HCT116 (cell line): ENCODE measurements at regions of chr1 and their contacts with region 1.

Region 1: DNA sequence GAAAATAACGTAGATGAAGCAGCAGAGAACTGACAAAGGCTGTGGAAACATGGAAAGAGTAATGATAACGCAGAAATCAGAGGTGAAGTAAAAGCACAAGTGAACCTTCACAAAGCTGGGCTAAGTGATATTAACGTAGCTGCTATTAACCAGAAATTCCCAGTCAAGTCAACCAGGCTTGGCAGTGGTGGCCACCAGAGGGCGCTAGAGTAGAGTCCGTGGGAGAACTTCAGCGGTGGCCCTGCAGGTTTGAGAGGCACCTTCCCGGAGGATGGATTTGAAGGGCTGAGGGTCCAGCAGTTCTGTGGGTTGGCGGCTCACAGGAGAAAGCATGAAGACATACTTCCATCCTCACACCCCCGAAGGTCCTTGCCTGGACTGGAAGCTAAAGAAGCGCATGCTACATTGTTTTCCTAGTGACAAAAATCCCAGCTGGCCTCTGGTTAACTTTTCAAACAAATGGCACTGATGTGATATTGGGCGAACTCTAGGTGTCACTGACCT is 81.7 kb upstream of the ZNF648 start:
- DNase-seq: peak; percentile 58
- ATAC-seq: peak; percentile 95
- H3K4me3 ChIP-seq: no peak overlapping the region
- H3K27ac ChIP-seq: no peak overlapping the region
- H3K4me1 ChIP-seq: no peaks in the 10 kb centered on the region
- H3K27me3 ChIP-seq: no peaks in the 10 kb centered on the region
- CTCF ChIP-seq: peak; percentile 86 to 97 (median 92)
- POLR2A ChIP-seq: no peak
- RAD21 ChIP-seq: peak; percentile 97

Region 2: DNA sequence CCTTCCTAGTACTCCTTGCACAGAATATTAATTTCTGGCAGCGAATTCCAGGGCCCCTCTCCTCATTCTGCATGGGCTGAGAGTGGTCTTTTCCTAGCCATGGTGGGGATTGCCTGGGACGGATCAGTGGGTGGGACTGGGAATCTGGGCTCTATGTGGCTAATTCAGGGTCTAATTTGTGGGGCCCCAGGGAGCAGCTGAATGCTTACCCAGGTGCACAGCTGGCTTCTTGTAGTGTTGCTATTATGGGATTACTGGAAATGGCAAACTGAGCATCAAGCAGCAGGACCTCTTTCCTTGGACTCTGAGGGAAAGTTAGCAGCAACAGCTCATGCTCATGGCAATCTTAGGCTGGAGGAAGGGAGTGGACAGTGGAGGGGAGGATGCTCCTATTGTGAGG is 847.0 kb before region 1 on chr1:
- CTCF ChIA-PET with region 1: no interaction called
- POLR2A ChIA-PET with region 1: no interaction called
- RAD21 ChIA-PET with region 1: no interaction called
- intact Hi-C with region 1: no loop called
- DNase-seq: no peak
- ATAC-seq: no peak
- H3K4me3 ChIP-seq: no peak overlapping the region
- H3K27ac ChIP-seq: no peak overlapping the region
- H3K4me1 ChIP-seq: no peaks in the 10 kb centered on the region
- H3K27me3 ChIP-seq: 0 out of 2 replicates have a peak, but pooled peaks cover 4% of the 10 kb centered on the region
- CTCF ChIP-seq: no peak
- POLR2A ChIP-seq: no peak
- RAD21 ChIP-seq: no peak

Region 3: DNA sequence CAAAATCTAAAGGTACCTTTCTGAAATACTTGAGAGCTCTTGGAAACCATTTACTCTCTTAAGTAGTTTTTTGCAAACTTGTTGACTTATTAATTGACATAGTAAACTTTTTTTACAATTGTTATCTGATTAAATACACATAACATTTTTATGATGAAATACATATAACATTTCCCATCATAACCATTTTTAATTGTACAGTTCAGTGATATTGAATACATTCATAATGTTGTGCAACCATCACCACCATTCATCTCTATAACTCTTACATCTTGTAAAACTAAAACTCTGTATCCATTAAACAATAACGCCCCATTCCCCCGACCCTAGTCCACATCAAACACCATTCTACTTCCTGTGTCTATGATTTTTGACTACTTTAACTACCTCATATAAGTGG is 14.0 kb after region 1 on chr1:
- CTCF ChIA-PET with region 1: interaction called, 15 read pairs
- POLR2A ChIA-PET with region 1: no interaction called
- RAD21 ChIA-PET with region 1: no interaction called
- intact Hi-C with region 1: no loop called
- DNase-seq: no peak
- ATAC-seq: no peak
- H3K4me3 ChIP-seq: no peak overlapping the region
- H3K27ac ChIP-seq: no peak overlapping the region
- H3K4me1 ChIP-seq: no peaks in the 10 kb centered on the region
- H3K27me3 ChIP-seq: no peaks in the 10 kb centered on the region
- CTCF ChIP-seq: no peak
- POLR2A ChIP-seq: no peak
- RAD21 ChIP-seq: no peak

Region 4: DNA sequence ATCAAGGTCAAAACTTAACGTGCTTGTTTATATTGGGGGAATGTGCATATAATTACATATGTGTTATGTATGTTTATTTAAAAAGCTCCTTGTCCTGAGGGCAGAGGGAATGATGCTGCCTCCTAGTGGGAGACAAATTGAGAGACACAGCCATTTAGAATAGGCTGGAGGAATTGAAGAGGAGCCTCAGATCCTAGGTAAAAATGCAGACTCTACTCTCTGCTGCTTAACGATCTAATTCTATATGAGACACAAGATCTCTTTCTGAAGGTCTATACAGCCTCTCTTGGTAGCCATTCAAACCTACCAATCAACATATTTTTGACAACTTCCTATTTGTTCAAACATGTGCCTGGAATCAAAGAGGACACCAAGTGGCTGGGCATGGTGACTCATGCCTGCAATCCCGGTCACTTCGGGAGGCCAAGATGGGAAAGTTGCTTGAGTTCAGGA is 54.9 kb after region 1 on chr1:
- CTCF ChIA-PET with region 1: interaction called, 14 read pairs
- POLR2A ChIA-PET with region 1: no interaction called
- RAD21 ChIA-PET with region 1: interaction called, 7 to 10 read pairs
- intact Hi-C with region 1: loop called (anchors 2 kb)
- DNase-seq: no peak
- ATAC-seq: peak; percentile 76
- H3K4me3 ChIP-seq: no peak overlapping the region
- H3K27ac ChIP-seq: no peak overlapping the region
- H3K4me1 ChIP-seq: no peaks in the 10 kb centered on the region
- H3K27me3 ChIP-seq: no peaks in the 10 kb centered on the region
- CTCF ChIP-seq: peak; percentile 41 to 43 (median 42); a peak in 5 of 6 replicates
- POLR2A ChIP-seq: no peak
- RAD21 ChIP-seq: peak; percentile 51

Region 5: GRCh38 chr1:182391362-182392044 is 248.3 kb after region 1 on chr1 and contains the start of gene GLUL:
- CTCF ChIA-PET with region 1: interaction called, 96 read pairs
- POLR2A ChIA-PET with region 1: interaction called, 18 read pairs
- RAD21 ChIA-PET with region 1: interaction called, 16 to 22 read pairs
- intact Hi-C with region 1: loop called (anchors 1 kb)
- DNase-seq: peak; percentile 68
- ATAC-seq: peak; percentile 93
- H3K4me3 ChIP-seq: peak within 1 kb of the TSS; percentile 71 to 85
- H3K27ac ChIP-seq: peak within 1 kb of the TSS; percentile 94
- H3K4me1 ChIP-seq: peaks cover 13 to 18% of the 10 kb centered on the region in 2 experiments
- H3K27me3 ChIP-seq: no peaks in the 10 kb centered on the region
- CTCF ChIP-seq: no peak
- POLR2A ChIP-seq: peak; percentile 97
- RAD21 ChIP-seq: no peak; the same call in 1 of the 2 replicates
- total RNA-seq, gene GLUL: 165 TPM

Region 6: DNA sequence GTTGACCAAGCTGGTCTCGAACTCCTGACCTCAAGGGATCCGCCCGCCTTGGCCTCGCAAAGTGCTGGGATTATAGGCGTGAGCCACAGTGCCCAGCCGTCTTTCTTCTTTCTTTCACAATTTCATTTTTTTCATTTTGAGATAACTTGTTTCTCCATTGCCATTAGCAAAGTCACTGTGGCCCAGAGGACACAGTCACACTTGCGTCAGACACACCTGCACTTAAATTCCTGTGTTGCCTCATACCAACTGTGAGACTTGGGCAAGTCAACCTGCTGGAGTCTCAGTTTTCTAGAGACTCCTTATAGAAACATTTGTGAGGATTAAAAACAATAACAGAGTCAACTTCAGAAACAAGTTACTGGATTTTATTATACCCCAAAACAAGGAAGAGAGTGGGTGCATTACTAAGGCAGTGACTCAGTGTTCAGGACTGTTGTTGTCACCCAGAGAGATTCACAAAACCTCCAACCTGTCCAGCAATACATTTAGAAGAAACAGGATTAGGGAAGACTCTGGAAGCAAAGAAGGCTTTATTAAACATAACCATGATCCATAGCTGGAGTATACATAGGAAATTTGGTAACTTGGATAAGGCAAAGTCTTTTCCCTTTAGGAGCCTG is 254.7 kb after region 1 on chr1:
- CTCF ChIA-PET with region 1: interaction called, 96 read pairs
- POLR2A ChIA-PET with region 1: interaction called, 4 read pairs
- RAD21 ChIA-PET with region 1: interaction called, 16 to 22 read pairs
- intact Hi-C with region 1: loop called (anchors 1 kb)
- DNase-seq: no peak
- ATAC-seq: no peak
- H3K4me3 ChIP-seq: no peak overlapping the region
- H3K27ac ChIP-seq: no peak overlapping the region
- H3K4me1 ChIP-seq: peaks cover 3 to 15% of the 10 kb centered on the region in 2 experiments; a peak in 3 of 4 replicates
- H3K27me3 ChIP-seq: no peaks in the 10 kb centered on the region
- CTCF ChIP-seq: no peak
- POLR2A ChIP-seq: no peak
- RAD21 ChIP-seq: no peak

Region 7: GRCh38 chr1:183180634-183181056 is 1037.4 kb after region 1 on chr1:
- CTCF ChIA-PET with region 1: no interaction called
- POLR2A ChIA-PET with region 1: no interaction called
- RAD21 ChIA-PET with region 1: no interaction called
- intact Hi-C with region 1: no loop called
- DNase-seq: no peak
- ATAC-seq: peak; percentile 57
- H3K4me3 ChIP-seq: no peak overlapping the region
- H3K27ac ChIP-seq: no peak overlapping the region
- H3K4me1 ChIP-seq: peaks cover 8 to 20% of the 10 kb centered on the region in 2 experiments
- H3K27me3 ChIP-seq: no peaks in the 10 kb centered on the region
- CTCF ChIP-seq: no peak
- POLR2A ChIP-seq: no peak
- RAD21 ChIP-seq: no peak